AG04450 (cell line): ENCODE measurements at regions of chr16 and their contacts with region 1.

Region 1: GRCh38 chr16:69132424-69133252 is at the starts of genes CHTF8 and UTP4:
- DNase-seq: peak; percentile 16
- H3K4me3 ChIP-seq: peak within 1 kb of the TSS; percentile 91
- H3K27ac ChIP-seq: peak within 1 kb of the TSS; percentile 78
- H3K27me3 ChIP-seq: no peaks in the 10 kb centered on the region
- CTCF ChIP-seq: no peak
- polyA plus RNA-seq, gene CHTF8: 84.8 and 112 TPM in 2 replicates
- polyA plus RNA-seq, gene UTP4: 54.2 and 54.3 TPM in 2 replicates

Region 2: GRCh38 chr16:69073161-69073669 is 59.4 kb before region 1 on chr16:
- CTCF ChIA-PET with region 1: no interaction called
- POLR2A ChIA-PET with region 1: interaction called, 12 read pairs
- DNase-seq: no peak
- H3K4me3 ChIP-seq: no peak overlapping the region
- H3K27ac ChIP-seq: peak overlapping the region; percentile 53
- H3K27me3 ChIP-seq: no peaks in the 10 kb centered on the region
- CTCF ChIP-seq: no peak

Region 3: DNA sequence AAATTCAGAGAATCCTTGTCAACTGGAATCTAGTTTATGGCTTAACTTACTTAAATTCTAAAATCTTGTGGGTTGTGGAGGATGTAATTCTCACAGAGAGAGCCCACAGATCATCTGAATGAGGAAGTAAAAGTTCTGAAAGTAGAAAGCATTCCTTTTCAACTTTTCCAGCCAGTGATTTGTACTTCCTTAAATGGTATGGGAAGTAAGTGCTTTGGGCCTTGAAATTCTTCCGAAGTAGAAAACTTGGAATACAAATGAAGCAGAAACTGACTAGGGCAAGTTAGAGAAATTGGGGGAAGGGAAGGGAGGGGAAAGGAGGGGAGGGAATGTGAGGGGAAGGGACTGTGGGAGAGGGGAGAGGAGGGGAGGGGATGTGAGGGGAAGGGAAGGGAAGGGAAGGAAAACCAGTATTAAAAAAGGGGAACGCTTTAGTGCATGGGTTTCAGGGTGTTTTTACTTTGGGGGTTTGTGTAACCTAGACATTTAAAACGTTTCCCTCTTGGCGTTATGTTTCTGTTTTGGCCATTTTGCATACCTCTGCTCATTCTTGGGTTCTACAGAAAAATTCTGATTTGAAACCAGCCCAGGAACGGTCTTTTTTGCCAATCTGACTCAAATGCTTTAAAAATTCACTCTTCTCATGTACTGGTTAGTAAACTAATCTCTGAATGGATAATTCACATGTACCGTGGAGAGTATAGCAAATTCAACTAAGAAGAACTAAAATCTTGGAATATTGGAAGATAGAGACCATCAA is 38.9 kb after region 1 on chr16:
- CTCF ChIA-PET with region 1: no interaction called
- POLR2A ChIA-PET with region 1: no interaction called
- DNase-seq: peak; percentile 52
- H3K4me3 ChIP-seq: no peak overlapping the region
- H3K27ac ChIP-seq: no peak overlapping the region
- H3K27me3 ChIP-seq: no peaks in the 10 kb centered on the region
- CTCF ChIP-seq: no peak

Region 4: DNA sequence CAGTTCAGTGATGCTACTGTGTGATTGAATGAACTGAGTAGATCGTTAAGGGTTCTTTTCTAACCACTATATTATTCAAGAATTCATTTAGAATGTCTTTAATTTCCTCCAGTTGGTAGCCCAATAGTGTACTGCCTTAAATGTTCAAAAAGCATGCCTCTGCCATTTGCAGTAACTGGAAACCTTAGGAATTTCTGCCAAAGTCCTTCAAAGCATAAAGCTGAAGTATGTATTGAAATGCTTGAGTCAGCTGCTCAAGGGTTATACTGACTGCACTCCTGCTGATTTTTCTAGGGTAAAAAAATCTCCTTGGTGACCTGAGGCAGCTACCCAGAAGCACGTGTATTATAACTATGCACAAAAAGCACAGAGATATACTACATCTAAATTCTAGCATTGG is 110.8 kb after region 1 on chr16:
- CTCF ChIA-PET with region 1: no interaction called
- POLR2A ChIA-PET with region 1: no interaction called
- DNase-seq: peak; percentile 47
- H3K4me3 ChIP-seq: no peak overlapping the region
- H3K27ac ChIP-seq: no peak overlapping the region
- H3K27me3 ChIP-seq: no peaks in the 10 kb centered on the region
- CTCF ChIP-seq: no peak

Region 5: DNA sequence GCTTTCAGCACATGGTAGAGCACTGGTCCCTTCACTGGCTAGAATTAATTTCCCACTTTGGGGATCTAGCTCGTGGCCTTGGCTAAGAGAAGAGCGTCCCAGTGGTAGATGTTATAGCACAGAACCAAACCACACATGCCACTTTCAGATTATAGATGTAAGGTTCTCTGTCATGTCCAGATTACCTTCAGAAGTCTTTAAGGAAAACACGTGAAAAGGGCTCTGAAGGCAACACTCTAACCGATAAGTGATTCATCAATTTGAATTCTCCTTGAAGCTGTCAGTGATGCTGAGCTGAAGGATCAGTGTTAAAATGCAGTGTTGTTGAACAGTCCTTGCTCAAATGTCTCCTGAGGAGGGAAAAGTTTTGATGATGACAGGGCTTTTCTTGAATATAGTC is 135.0 kb after region 1 on chr16:
- CTCF ChIA-PET with region 1: no interaction called
- POLR2A ChIA-PET with region 1: no interaction called
- DNase-seq: no peak
- H3K4me3 ChIP-seq: no peak overlapping the region
- H3K27ac ChIP-seq: no peak overlapping the region
- H3K27me3 ChIP-seq: no peaks in the 10 kb centered on the region
- CTCF ChIP-seq: no peak

Region 6: DNA sequence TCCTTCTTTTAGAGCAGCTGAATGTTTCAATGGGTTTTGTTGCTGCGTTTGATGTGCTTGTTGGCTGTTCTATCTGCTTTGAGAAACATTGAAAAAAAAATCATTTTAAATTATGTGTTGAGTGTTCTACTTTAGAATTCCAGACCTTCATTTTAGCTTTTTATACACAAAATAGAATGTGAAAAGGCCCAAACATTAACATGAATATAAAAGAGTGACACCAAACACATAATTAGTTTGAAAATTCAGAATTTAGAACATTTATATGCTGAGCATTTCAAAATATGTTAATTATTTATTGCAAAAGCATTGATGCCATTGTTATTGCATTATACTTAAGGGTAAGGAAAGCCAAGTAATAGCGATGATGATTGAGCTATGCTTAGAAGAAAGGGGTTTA is 436.0 kb after region 1 on chr16:
- CTCF ChIA-PET with region 1: no interaction called
- POLR2A ChIA-PET with region 1: no interaction called
- DNase-seq: no peak
- H3K4me3 ChIP-seq: peak overlapping the region; percentile 39; the same call in 1 of the 2 replicates
- H3K27ac ChIP-seq: no peak overlapping the region
- H3K27me3 ChIP-seq: no peaks in the 10 kb centered on the region
- CTCF ChIP-seq: no peak